CD14-positive monocyte (primary cell): ENCODE measurements at regions of chrX and their contacts with region 1.

Region 1: GRCh38 chrX:132219343-132219768 is at the start of gene RAP2C:
- DNase-seq: peak; percentile 58 to 80 (median 67)
- H3K4me3 ChIP-seq: peak within 1 kb of the TSS; percentile 62 to 82 (median 73)
- H3K4me3 Mint-ChIP-seq: peak within 1 kb of the TSS; percentile 76 to 88
- H3K27ac ChIP-seq: peak within 1 kb of the TSS; percentile 92 to 97
- H3K27ac Mint-ChIP-seq: peak within 1 kb of the TSS; percentile 81 to 92 (median 90)
- H3K4me1 ChIP-seq: peaks cover 13 to 24% of the 10 kb centered on the region in 2 donors
- H3K4me1 Mint-ChIP-seq: peaks cover 21% of the 10 kb centered on the region
- H3K27me3 ChIP-seq: peaks cover 0 to 2% of the 10 kb centered on the region in 2 donors
- H3K27me3 Mint-ChIP-seq: peaks cover 0 to 13% (median 0%) of the 10 kb centered on the region in 3 donors
- CTCF ChIP-seq: peak; percentile 49
- polyA plus RNA-seq, gene RAP2C: 14.7 to 23.2 (median 18.8) TPM

Region 2: GRCh38 chrX:132092439-132093065 is 126.8 kb before region 1 on chrX:
- intact Hi-C with region 1: loop called in 1 of 2 experiments (anchors 10 kb)
- DNase-seq: peak; percentile 34 to 63 (median 52)
- H3K4me3 ChIP-seq: no peak overlapping the region
- H3K4me3 Mint-ChIP-seq: no peak overlapping the region
- H3K27ac ChIP-seq: no peak overlapping the region
- H3K27ac Mint-ChIP-seq: no peak overlapping the region
- H3K4me1 ChIP-seq: peaks cover 9 to 16% of the 10 kb centered on the region in 2 donors
- H3K4me1 Mint-ChIP-seq: peaks cover 21% of the 10 kb centered on the region
- H3K27me3 ChIP-seq: peaks cover 0 to 15% of the 10 kb centered on the region in 2 donors
- H3K27me3 Mint-ChIP-seq: peaks cover 0 to 13% (median 0%) of the 10 kb centered on the region in 3 donors
- CTCF ChIP-seq: peak; percentile 77

Region 3: GRCh38 chrX:132488819-132489577 is 269.6 kb after region 1 on chrX and contains the start of gene MBNL3:
- intact Hi-C with region 1: loop called (anchors 10 kb)
- DNase-seq: peak; percentile 47 to 58 (median 50)
- H3K4me3 ChIP-seq: peak within 1 kb of the TSS; percentile 53 to 81 (median 68)
- H3K4me3 Mint-ChIP-seq: peak within 1 kb of the TSS; percentile 89 to 90
- H3K27ac ChIP-seq: peak within 1 kb of the TSS; percentile 88 to 94
- H3K27ac Mint-ChIP-seq: peak within 1 kb of the TSS; percentile 89 to 95 (median 93)
- H3K4me1 ChIP-seq: peaks cover 42 to 46% of the 10 kb centered on the region in 2 donors
- H3K4me1 Mint-ChIP-seq: peaks cover 48% of the 10 kb centered on the region
- H3K27me3 ChIP-seq: no peaks in the 10 kb centered on the region
- H3K27me3 Mint-ChIP-seq: peaks cover 0 to 7% (median 0%) of the 10 kb centered on the region in 3 donors
- CTCF ChIP-seq: no peak
- polyA plus RNA-seq, gene MBNL3: 7.4 to 32.8 (median 22.4) TPM